Activated CD4-positive, alpha-beta memory T cell treated with anti-CD3 and anti-CD28 coated beads, Interleukin-2, amount 10 ng/mL, durations not matched to agents 7 days and 5 days (primary cell): ENCODE measurements at regions of chr7 and their contacts with region 1.

Region 1: GRCh38 chr7:150514748-150515222 is at the start of gene GIMAP7:
- DNase-seq: peak; percentile 77
- H3K4me3 Mint-ChIP-seq: peak within 1 kb of the TSS; percentile 100
- H3K27ac Mint-ChIP-seq: peak within 1 kb of the TSS; percentile 100
- H3K4me1 Mint-ChIP-seq: peaks cover 55% of the 10 kb centered on the region
- H3K27me3 Mint-ChIP-seq: no peaks in the 10 kb centered on the region
- total RNA-seq, gene GIMAP7: 169 to 171 TPM

Region 2: DNA sequence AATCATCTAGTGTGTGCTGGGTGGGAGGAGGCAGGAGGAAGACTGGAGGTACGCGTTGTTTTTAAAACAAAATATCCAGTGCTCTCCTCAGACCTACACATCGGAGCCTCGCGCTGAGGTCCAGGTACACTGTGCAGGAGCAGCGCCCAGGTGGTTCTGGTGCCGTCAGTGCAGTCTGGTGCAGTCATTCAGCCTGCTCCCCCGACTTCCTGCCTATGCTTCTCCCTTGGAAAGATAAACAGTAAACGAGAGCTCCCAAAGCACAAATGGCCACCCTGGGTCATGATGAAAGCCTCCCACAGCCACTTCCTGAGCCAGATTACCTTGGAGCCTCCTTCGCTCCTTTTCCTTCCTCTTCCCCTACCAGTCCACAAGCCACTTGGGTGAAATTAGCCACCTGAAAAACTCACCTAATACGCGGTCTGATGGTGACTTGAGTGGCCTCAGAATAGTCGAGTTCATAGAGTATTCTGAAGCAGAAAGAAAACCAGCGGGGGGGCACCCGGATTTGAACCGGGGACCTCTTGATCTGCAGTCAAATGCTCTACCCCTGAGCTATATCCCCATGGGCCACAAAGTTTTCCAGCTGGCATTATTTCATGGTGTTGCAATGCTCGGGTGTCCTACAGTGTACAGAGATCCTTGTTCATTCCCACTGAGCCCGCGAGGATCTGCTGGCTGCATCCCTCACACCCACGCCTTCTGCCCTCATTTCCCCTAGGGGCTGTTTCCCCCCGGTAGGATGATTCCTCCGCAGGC is 823.9 kb before region 1 on chr7:
- CTCF ChIA-PET with region 1: no interaction called
- POLR2A ChIA-PET with region 1: no interaction called
- DNase-seq: no peak
- H3K4me3 Mint-ChIP-seq: no peak overlapping the region
- H3K27ac Mint-ChIP-seq: no peak overlapping the region
- H3K4me1 Mint-ChIP-seq: no peaks in the 10 kb centered on the region
- H3K27me3 Mint-ChIP-seq: peaks cover 38% of the 10 kb centered on the region

Region 3: DNA sequence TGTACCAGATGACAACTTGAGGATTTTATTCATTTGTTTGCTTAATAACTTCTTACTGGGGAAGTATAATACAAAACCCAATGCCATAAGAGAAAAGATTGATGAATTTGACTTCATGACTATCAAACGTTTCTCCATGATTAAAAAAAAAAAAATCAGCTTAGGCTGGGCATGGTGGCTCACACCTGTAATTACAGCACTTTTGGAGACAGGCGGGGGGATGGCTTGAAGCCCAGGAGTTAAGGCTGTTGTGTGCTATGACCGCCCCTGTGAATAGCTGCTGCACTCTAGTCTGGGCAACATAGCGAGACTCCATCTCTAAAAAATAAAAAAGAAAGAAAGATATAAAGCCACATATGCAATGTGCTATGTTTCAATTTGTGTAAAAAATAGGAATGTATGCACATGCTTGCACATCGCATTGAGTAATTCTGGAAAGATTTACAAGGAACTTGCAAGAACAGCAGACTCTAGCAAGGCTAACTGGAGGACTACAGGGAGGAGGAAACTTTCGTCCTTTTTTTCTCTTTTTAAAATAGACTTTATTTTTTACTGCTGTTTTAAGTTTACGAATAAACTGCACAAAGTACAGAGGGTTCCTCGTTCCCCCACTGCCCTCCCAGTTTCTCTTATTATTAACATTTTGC is 163.1 kb before region 1 on chr7:
- CTCF ChIA-PET with region 1: no interaction called
- POLR2A ChIA-PET with region 1: no interaction called
- DNase-seq: no peak
- H3K4me3 Mint-ChIP-seq: no peak overlapping the region
- H3K27ac Mint-ChIP-seq: no peak overlapping the region
- H3K4me1 Mint-ChIP-seq: peaks cover 11% of the 10 kb centered on the region
- H3K27me3 Mint-ChIP-seq: peaks cover 2% of the 10 kb centered on the region

Region 4: DNA sequence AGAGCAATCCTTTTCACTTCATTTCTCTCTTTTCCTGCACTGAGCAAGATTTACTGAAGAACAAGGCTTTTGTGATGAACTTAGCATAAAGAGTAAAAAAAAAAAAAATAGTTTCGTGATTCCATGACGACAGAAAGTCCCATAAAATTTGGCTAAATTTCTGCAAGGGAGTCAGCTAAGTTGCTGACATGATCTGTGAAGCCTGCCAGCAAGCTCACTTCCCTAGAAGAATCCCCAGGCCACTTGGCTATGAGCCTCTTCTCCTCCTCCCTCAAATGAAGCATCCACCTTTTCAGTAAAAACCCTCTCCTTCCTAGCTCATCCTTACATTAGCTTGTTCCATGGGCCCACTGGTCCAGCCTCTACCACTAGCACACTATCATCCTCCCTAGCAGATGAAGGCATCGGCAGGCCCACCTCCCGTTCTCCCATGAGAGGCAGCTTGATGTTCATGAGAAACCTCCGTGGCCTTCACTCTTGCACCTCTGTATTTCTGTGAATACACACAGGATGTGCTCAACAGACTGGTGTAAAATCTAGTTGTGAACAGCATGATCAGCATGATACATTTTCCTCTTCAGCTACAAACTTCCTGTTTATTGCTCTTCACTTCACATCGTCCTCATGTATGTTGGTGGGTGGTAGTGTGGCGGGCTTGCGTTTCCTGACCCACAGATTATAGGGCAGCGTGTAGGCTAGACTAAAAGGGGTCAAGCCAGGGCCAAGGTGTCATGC is 33.4 kb before region 1 on chr7:
- CTCF ChIA-PET with region 1: interaction called, 7 read pairs
- POLR2A ChIA-PET with region 1: interaction called, 86 read pairs
- DNase-seq: peak; percentile 70
- H3K4me3 Mint-ChIP-seq: peak overlapping the region; percentile 81
- H3K27ac Mint-ChIP-seq: peak overlapping the region; percentile 99
- H3K4me1 Mint-ChIP-seq: peaks cover 95% of the 10 kb centered on the region
- H3K27me3 Mint-ChIP-seq: no peaks in the 10 kb centered on the region

Region 5: DNA sequence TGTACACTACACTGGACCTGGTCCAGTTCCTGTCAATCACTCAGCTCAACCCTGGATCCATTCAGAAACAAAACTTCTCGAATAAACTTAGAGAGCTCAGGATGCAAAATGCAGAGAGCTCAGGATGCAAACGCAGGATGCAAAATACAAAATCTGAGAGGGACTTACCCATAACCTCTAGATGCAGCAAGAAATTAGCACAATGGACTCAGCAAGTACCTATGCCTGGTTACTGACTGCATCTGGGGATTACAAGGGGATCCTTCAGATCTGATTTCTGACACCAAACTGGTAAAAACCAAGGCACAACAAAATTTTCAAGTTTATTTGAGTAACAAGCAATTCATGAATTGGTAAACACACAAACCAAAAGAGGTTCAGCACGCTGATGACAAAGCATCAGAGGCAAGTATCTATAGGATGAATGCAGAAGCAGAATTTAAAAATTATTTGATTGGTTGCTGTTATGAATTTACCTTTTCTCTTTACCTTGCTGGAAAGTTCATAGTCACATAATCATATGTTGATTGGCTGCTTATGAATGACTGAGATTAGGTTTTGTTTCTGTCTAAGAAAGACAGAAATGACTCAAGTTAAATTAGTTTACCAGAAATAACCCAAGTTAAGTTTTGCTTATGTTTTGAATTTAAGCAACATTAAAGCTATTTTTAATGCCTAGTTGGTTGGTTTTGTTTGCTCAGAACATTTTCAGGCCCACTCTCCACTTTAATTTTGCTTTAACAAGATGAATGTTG is 106.0 kb after region 1 on chr7:
- CTCF ChIA-PET with region 1: no interaction called
- POLR2A ChIA-PET with region 1: interaction called, 14 read pairs
- DNase-seq: no peak
- H3K4me3 Mint-ChIP-seq: no peak overlapping the region
- H3K27ac Mint-ChIP-seq: peak overlapping the region; percentile 82
- H3K4me1 Mint-ChIP-seq: peaks cover 56% of the 10 kb centered on the region
- H3K27me3 Mint-ChIP-seq: no peaks in the 10 kb centered on the region

Region 6: GRCh38 chr7:150668472-150668911 is 153.7 kb after region 1 on chr7:
- CTCF ChIA-PET with region 1: interaction called, 3 read pairs
- POLR2A ChIA-PET with region 1: interaction called, 15 read pairs
- DNase-seq: peak; percentile 75
- H3K4me3 Mint-ChIP-seq: peak overlapping the region; percentile 41
- H3K27ac Mint-ChIP-seq: peak overlapping the region; percentile 95
- H3K4me1 Mint-ChIP-seq: peaks cover 84% of the 10 kb centered on the region
- H3K27me3 Mint-ChIP-seq: no peaks in the 10 kb centered on the region

Region 7: GRCh38 chr7:150716368-150716767 is 201.6 kb after region 1 on chr7 and contains the start of gene GIMAP1:
- CTCF ChIA-PET with region 1: interaction called, 4 read pairs
- POLR2A ChIA-PET with region 1: interaction called, 15 read pairs
- DNase-seq: peak; percentile 69
- H3K4me3 Mint-ChIP-seq: peak within 1 kb of the TSS; percentile 97
- H3K27ac Mint-ChIP-seq: peak within 1 kb of the TSS; percentile 79
- H3K4me1 Mint-ChIP-seq: peaks cover 62% of the 10 kb centered on the region
- H3K27me3 Mint-ChIP-seq: no peaks in the 10 kb centered on the region
- total RNA-seq, gene GIMAP1: 18.8 to 21.0 TPM

Region 8: GRCh38 chr7:150748376-150748775 is 233.6 kb after region 1 on chr7:
- CTCF ChIA-PET with region 1: interaction called, 4 read pairs
- POLR2A ChIA-PET with region 1: interaction called, 10 read pairs
- DNase-seq: no peak
- H3K4me3 Mint-ChIP-seq: no peak overlapping the region
- H3K27ac Mint-ChIP-seq: peak overlapping the region; percentile 16
- H3K4me1 Mint-ChIP-seq: peaks cover 76% of the 10 kb centered on the region
- H3K27me3 Mint-ChIP-seq: no peaks in the 10 kb centered on the region